GM10248 (cell line): ENCODE measurements at regions of chr9 and their contacts with region 1.

Region 1: GRCh38 chr9:37295796-37296195 is 126.7 kb upstream of the GRHPR start:
- DNase-seq: no peak
- CTCF ChIP-seq: peak; percentile 30

Region 2: DNA sequence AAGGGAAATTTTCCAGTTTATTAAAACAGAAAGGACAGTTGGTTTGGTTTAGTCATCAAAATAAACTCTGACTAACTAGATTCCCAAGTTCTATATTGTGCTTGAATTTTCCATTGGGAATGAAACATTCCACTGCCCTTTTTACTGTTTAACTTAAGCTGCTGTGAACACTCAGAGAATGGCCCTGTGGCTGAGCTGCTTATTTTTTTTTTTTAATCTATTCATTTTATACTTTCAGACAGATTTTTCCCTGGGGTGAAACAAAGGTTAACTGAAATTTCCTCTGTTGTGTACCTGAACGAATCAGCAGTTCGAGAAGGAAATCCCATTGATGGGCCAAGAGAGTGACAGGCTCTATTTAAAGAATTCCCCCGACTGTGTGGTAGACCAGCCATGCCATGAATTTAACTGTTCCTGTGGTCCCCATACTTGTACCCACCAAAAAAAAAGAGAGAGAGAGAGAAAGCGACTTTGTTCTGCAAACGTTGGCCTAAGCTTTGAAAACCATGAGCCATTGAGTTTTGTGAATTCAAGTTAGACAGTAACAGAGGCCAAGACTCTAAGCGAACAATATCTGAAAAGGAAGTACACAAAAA is 12.0 kb before region 1 on chr9:
- CTCF ChIA-PET with region 1: interaction called, 13 read pairs
- POLR2A ChIA-PET with region 1: no interaction called
- DNase-seq: peak; percentile 26
- CTCF ChIP-seq: no peak